ENCODE measurements at regions of chr12 and their contacts with region 1.

Region 1: GRCh38 chr12:102119674-102120563 is at the starts of genes NUP37 and PARPBP:
- DNase-seq: peak; percentile 85 to 91
- H3K4me3 ChIP-seq: peak within 1 kb of the TSS; percentile 67 to 72
- H3K27ac ChIP-seq: peak within 1 kb of the TSS; percentile 78 to 87
- H3K4me1 ChIP-seq: peaks cover 0 to 17% (median 10%) of the 10 kb centered on the region in 4 donors
- H3K27me3 ChIP-seq: no peaks in the 10 kb centered on the region
- CTCF ChIP-seq: peak; percentile 9 to 13

Region 2: DNA sequence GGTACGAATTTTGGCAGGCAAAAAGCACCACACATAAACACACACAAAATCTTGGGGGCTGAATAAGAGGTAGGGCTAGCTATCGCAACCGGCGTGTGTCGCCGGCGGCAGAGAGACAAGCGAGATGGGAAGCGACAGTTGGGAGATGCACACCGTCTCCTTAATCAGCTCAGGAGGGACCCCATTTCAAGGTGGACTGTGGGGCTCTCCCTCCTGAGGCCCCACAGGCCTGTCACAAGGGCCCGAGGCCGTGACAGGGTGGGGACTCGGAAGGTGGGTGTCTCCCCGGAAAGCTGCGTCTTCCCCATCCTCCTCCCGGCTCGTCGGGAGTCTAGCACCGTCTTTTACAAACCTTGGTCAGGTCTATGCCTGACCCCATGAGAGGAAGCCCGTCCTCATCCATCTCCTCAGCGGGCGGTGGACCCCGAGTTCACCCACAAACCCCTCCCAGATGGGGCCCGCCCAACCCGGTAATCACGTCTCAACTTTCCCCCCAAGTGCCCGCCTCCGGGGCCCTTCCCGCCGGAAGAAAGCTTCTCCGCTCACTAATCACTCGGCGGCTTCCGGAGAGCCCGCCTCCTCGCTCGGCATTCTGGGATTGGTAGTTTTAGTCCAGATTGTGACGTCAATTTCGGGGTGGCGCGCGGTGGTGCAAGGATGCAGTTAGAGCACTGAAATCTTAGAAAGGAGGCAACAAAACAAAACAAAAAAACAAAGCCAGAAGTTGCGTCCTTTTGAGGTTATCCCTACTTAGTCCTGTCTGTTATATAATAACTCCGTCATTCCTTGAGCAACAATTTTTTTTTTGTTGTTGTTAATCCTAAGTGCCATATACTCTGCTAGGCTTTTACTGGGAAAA is 58.1 kb before region 1 on chr12 and contains the start of gene WASHC3:
- intact Hi-C with region 1: loop called (anchors 2 kb)
- DNase-seq: peak; percentile 97 to 98
- H3K4me3 ChIP-seq: peak within 1 kb of the TSS; percentile 79 to 87
- H3K27ac ChIP-seq: peak within 1 kb of the TSS; percentile 89 to 93
- H3K4me1 ChIP-seq: peaks cover 0 to 4% (median 4%) of the 10 kb centered on the region in 4 donors
- H3K27me3 ChIP-seq: no peaks in the 10 kb centered on the region
- CTCF ChIP-seq: peak in 1 of 2 experiments; percentile 6